Activated CD4-positive, alpha-beta memory T cell treated with anti-CD3 and anti-CD28 coated beads for 36 hours (primary cell): ENCODE measurements at regions of chr4 and their contacts with region 1.

Region 1: GRCh38 chr4:48851651-48852050 is 20.8 kb downstream of the OCIAD1 start:
- DNase-seq: no peak
- H3K4me3 Mint-ChIP-seq: no peak overlapping the region
- H3K27ac Mint-ChIP-seq: no peak overlapping the region
- H3K4me1 Mint-ChIP-seq: peaks cover 14% of the 10 kb centered on the region
- H3K27me3 Mint-ChIP-seq: no peaks in the 10 kb centered on the region

Region 2: DNA sequence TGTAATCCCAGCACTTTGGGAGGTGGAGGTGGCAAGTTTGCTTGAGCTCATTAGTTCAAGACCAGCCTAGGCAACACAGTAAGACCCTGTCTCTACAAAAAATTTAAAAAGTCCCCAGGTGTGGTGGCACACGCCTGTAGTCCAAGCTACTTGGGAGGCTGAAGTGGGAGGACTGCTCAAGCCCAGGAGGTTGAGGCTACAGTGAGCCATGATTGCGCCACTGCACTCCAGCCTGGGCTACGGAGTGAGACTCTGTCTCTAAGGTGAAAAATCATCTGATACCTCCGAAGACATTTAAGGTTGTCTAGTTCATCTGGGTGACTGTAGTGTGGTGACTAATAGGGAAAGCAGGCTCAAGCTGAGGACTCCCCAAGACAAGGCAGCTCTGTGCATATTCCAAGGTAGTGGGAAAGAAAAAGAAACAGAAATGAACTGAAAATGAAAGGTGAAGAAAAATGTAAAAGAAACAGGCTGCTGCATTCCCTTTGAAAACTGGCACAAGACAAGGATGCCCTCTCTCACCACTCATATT is 94.9 kb before region 1 on chr4:
- CTCF ChIA-PET with region 1: no interaction called
- POLR2A ChIA-PET with region 1: no interaction called
- intact Hi-C with region 1: no loop called
- DNase-seq: no peak
- H3K4me3 Mint-ChIP-seq: no peak overlapping the region
- H3K27ac Mint-ChIP-seq: no peak overlapping the region
- H3K4me1 Mint-ChIP-seq: peaks cover 57% of the 10 kb centered on the region
- H3K27me3 Mint-ChIP-seq: no peaks in the 10 kb centered on the region

Region 3: GRCh38 chr4:48898733-48899431 is 47.2 kb after region 1 on chr4:
- CTCF ChIA-PET with region 1: no interaction called
- POLR2A ChIA-PET with region 1: no interaction called
- intact Hi-C with region 1: loop called (anchors 2 kb)
- DNase-seq: no peak
- H3K4me3 Mint-ChIP-seq: no peak overlapping the region
- H3K27ac Mint-ChIP-seq: peak overlapping the region; percentile 52
- H3K4me1 Mint-ChIP-seq: peaks cover 24% of the 10 kb centered on the region
- H3K27me3 Mint-ChIP-seq: no peaks in the 10 kb centered on the region